ENCODE measurements at regions of chr2 and their contacts with region 1.

Region 1: GRCh38 chr2:237998530-237998929 is 31.7 kb downstream of the UBE2F start:
- DNase-seq: peak; percentile 71
- ATAC-seq: peak; percentile 91
- H3K4me3 Mint-ChIP-seq: peak overlapping the region; percentile 53
- H3K27ac Mint-ChIP-seq: peak overlapping the region; percentile 97
- H3K4me1 Mint-ChIP-seq: peaks cover 65% of the 10 kb centered on the region
- H3K27me3 Mint-ChIP-seq: no peaks in the 10 kb centered on the region

Region 2: GRCh38 chr2:237154082-237154638 is 844.4 kb before region 1 on chr2:
- CTCF ChIA-PET with region 1: no interaction called
- POLR2A ChIA-PET with region 1: no interaction called
- intact Hi-C with region 1: loop called in 1 of 2 experiments (anchors 5 kb)
- DNase-seq: peak; percentile 78
- ATAC-seq: peak; percentile 7
- H3K4me3 Mint-ChIP-seq: no peak overlapping the region
- H3K27ac Mint-ChIP-seq: no peak overlapping the region
- H3K4me1 Mint-ChIP-seq: peaks cover 44% of the 10 kb centered on the region
- H3K27me3 Mint-ChIP-seq: peaks cover 4% of the 10 kb centered on the region

Region 3: GRCh38 chr2:237441605-237442274 is 556.8 kb before region 1 on chr2:
- CTCF ChIA-PET with region 1: no interaction called
- POLR2A ChIA-PET with region 1: no interaction called
- intact Hi-C with region 1: loop called in 1 of 2 experiments (anchors 1 kb)
- DNase-seq: peak; percentile 69
- ATAC-seq: peak; percentile 71
- H3K4me3 Mint-ChIP-seq: peak overlapping the region; percentile 50
- H3K27ac Mint-ChIP-seq: peak overlapping the region; percentile 96
- H3K4me1 Mint-ChIP-seq: peaks cover 82% of the 10 kb centered on the region
- H3K27me3 Mint-ChIP-seq: no peaks in the 10 kb centered on the region

Region 4: GRCh38 chr2:237700512-237701032 is 298.0 kb before region 1 on chr2:
- CTCF ChIA-PET with region 1: no interaction called
- POLR2A ChIA-PET with region 1: no interaction called
- intact Hi-C with region 1: loop called in 1 of 2 experiments (anchors 5 kb)
- DNase-seq: peak; percentile 90
- ATAC-seq: peak; percentile 63
- H3K4me3 Mint-ChIP-seq: peak overlapping the region; percentile 70
- H3K27ac Mint-ChIP-seq: peak overlapping the region; percentile 95
- H3K4me1 Mint-ChIP-seq: peaks cover 97% of the 10 kb centered on the region
- H3K27me3 Mint-ChIP-seq: no peaks in the 10 kb centered on the region

Region 5: GRCh38 chr2:237786936-237787335 is 211.6 kb before region 1 on chr2:
- CTCF ChIA-PET with region 1: no interaction called
- POLR2A ChIA-PET with region 1: no interaction called
- intact Hi-C with region 1: no loop called
- DNase-seq: no peak
- ATAC-seq: no peak
- H3K4me3 Mint-ChIP-seq: no peak overlapping the region
- H3K27ac Mint-ChIP-seq: no peak overlapping the region
- H3K4me1 Mint-ChIP-seq: no peaks in the 10 kb centered on the region
- H3K27me3 Mint-ChIP-seq: no peaks in the 10 kb centered on the region

Region 6: DNA sequence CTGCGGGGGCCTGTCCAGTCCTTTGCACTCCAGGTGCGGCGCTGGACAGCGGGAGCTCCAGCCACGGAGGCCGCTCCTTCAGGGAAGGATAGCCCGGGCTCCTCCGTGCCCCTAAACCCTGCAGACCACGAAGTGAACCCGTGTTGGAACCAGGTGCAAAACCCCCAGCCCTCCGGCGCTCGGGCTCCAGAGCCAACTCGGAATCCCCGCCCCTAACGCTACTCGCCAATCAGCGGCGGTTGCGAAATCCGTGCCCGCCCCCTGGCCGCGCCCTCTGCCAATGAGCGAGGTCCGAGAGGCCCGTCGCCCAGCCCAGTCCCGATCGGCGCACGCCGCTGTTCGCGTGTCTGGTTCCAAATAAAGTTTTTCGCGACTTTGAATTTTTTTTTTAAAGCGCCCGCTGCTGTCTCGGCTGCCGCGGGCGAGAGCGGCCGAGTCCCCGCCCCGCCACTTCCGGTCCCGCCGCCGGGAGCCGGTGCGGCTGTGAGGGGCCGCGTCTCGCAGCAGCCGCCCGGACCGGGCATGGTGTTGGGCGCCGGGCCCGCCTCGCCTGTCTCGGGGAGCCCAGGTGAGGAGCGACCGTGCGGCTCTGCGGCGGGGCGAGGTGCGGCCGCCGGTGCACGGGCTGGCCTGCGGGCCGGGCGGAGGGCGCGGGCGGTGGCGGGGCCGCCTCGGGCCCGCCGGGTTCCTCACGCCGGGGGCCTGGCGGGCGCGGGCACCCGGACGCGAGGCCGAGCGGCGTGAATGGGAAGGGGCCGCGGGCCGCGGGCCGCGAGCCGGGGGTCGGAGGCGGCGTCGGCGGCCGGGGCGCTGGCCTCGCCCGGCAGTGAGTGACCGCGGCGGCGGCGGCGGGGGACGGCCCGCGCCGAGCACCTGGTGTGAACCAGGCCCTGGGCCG is 31.7 kb before region 1 on chr2 and contains the start of gene UBE2F:
- CTCF ChIA-PET with region 1: interaction called, 3 read pairs
- POLR2A ChIA-PET with region 1: interaction called, 5 read pairs
- intact Hi-C with region 1: loop called (anchors 1 to 2 kb)
- DNase-seq: peak; percentile 98
- ATAC-seq: peak; percentile 95
- H3K4me3 Mint-ChIP-seq: peak within 1 kb of the TSS; percentile 78
- H3K27ac Mint-ChIP-seq: peak within 1 kb of the TSS; percentile 88
- H3K4me1 Mint-ChIP-seq: peaks cover 38% of the 10 kb centered on the region
- H3K27me3 Mint-ChIP-seq: no peaks in the 10 kb centered on the region
- total RNA-seq, gene UBE2F: 59.2 to 75.5 TPM

Region 7: GRCh38 chr2:238024986-238025385 is 26.5 kb after region 1 on chr2:
- CTCF ChIA-PET with region 1: interaction called, 3 read pairs
- POLR2A ChIA-PET with region 1: no interaction called
- intact Hi-C with region 1: loop called in 1 of 2 experiments (anchors 1 kb)
- DNase-seq: peak; percentile 77
- ATAC-seq: peak; percentile 100
- H3K4me3 Mint-ChIP-seq: peak overlapping the region; percentile 32
- H3K27ac Mint-ChIP-seq: peak overlapping the region; percentile 84
- H3K4me1 Mint-ChIP-seq: peaks cover 20% of the 10 kb centered on the region
- H3K27me3 Mint-ChIP-seq: no peaks in the 10 kb centered on the region

Region 8: GRCh38 chr2:238203094-238203972 is 204.8 kb after region 1 on chr2 and contains the start of gene ILKAP:
- CTCF ChIA-PET with region 1: no interaction called
- POLR2A ChIA-PET with region 1: no interaction called
- intact Hi-C with region 1: loop called in 1 of 2 experiments (anchors 1 kb)
- DNase-seq: peak; percentile 95
- ATAC-seq: peak; percentile 98
- H3K4me3 Mint-ChIP-seq: peak within 1 kb of the TSS; percentile 83
- H3K27ac Mint-ChIP-seq: peak within 1 kb of the TSS; percentile 87
- H3K4me1 Mint-ChIP-seq: peaks cover 46% of the 10 kb centered on the region
- H3K27me3 Mint-ChIP-seq: no peaks in the 10 kb centered on the region
- total RNA-seq, gene ILKAP: 39.2 to 44.3 TPM